Caco-2 (cell line): ENCODE measurements at regions of chr12 and their contacts with region 1.

Region 1: DNA sequence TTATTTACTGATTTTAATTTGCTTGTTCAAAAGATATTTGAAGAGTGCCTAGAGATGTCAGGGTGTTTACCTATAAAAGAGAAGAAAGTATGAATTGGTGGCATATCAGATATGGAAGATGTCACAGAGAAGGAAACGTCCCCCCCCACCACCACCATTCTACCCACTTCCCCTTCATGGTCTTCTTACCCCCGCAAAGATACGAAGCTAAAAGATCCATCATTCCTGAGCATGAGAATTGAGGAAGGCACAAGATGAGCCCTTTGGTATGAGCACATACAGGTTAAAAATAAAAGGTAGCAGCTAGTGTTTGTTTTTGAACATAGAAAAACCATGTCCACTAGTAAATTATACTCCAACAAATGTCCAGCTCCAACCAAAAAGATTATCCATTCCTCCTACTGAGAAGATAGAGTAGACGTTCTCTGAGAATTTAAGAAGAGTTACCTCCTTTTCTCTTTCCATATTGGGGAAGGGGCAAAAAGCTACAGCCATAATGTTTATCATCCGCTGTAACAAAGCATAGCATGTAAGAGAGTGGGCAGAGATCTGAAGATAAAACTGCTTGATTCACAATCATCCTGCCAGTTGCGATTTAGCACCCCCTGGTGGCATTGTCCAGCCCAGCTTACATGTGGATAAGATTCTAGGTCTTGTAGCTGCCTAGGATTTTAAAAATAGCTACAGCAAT is 29.1 kb downstream of the NFYB start:
- DNase-seq: peak; percentile 82 to 86
- H3K4me3 ChIP-seq: no peak overlapping the region
- H3K4me3 Mint-ChIP-seq: no peak overlapping the region
- H3K27ac Mint-ChIP-seq: no peak overlapping the region
- H3K4me1 ChIP-seq: no peaks in the 10 kb centered on the region
- H3K4me1 Mint-ChIP-seq: no peaks in the 10 kb centered on the region
- H3K27me3 ChIP-seq: no peaks in the 10 kb centered on the region
- H3K27me3 Mint-ChIP-seq: no peaks in the 10 kb centered on the region
- CTCF ChIP-seq: peak; percentile 78 to 90

Region 2: DNA sequence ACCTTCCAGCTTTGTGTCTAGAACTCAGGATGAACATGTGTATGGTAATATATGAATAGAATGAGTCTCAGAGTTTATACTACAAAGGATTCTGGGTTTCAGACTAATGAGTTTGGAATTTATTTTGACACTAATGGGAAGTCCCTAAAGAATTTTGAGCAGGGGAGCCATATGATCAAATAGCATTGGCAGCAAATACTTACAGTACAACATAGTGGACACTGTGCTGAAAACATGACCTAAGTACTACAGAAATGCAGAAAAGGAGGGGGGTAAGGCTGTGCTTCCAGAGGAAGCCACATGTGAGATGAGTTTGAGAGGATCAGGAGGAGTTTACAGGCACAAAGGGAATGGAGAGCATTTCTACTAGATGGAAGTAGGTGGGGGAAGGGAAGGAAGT is 839.0 kb before region 1 on chr12:
- CTCF ChIA-PET with region 1: no interaction called
- POLR2A ChIA-PET with region 1: no interaction called
- intact Hi-C with region 1: no loop called
- DNase-seq: no peak
- H3K4me3 ChIP-seq: no peak overlapping the region
- H3K4me3 Mint-ChIP-seq: no peak overlapping the region
- H3K27ac Mint-ChIP-seq: no peak overlapping the region
- H3K4me1 ChIP-seq: no peaks in the 10 kb centered on the region; the same call in 1 of the 2 replicates
- H3K4me1 Mint-ChIP-seq: no peaks in the 10 kb centered on the region
- H3K27me3 ChIP-seq: no peaks in the 10 kb centered on the region
- H3K27me3 Mint-ChIP-seq: peaks cover 5% of the 10 kb centered on the region
- CTCF ChIP-seq: no peak

Region 3: DNA sequence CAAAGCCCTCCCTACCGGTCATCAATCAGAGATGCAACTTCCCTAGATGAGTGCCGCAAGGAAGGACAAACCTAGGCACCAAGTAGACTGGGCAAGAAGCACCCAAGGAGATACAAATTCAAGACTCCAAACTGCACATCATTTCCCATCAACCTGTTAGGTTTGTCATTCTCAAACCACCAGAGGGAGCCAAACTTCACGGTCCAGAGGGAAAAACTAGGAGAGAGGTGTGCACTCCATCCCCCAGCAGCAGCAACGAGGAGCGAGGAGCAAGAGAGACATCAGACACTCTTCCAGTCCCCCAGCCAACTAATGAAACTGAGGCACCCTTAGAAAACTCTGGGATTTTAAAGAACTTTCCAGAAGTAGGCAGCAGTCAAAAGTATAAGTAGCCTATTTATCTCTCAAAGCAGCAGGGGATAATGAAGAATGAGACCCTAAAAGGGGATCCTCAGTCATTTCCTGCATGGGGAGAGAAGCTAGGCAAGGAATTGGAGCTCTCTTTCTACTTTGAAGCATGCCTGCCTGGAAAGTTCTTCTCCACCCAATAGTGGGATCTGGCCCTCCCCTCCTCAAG is 230.9 kb before region 1 on chr12:
- CTCF ChIA-PET with region 1: interaction called, 3 read pairs
- POLR2A ChIA-PET with region 1: no interaction called
- intact Hi-C with region 1: loop called (anchors 1 kb)
- DNase-seq: peak; percentile 67 to 73
- H3K4me3 ChIP-seq: no peak overlapping the region
- H3K4me3 Mint-ChIP-seq: no peak overlapping the region
- H3K27ac Mint-ChIP-seq: no peak overlapping the region
- H3K4me1 ChIP-seq: no peaks in the 10 kb centered on the region
- H3K4me1 Mint-ChIP-seq: no peaks in the 10 kb centered on the region
- H3K27me3 ChIP-seq: no peaks in the 10 kb centered on the region
- H3K27me3 Mint-ChIP-seq: peaks cover 2% of the 10 kb centered on the region
- CTCF ChIP-seq: peak; percentile 76 to 82

Region 4: GRCh38 chr12:103884316-103884715 is 224.6 kb before region 1 on chr12:
- CTCF ChIA-PET with region 1: interaction called, 8 read pairs
- POLR2A ChIA-PET with region 1: no interaction called
- intact Hi-C with region 1: loop called (anchors 1 kb)
- DNase-seq: peak in 1 of 2 experiments; percentile 25
- H3K4me3 ChIP-seq: no peak overlapping the region
- H3K4me3 Mint-ChIP-seq: no peak overlapping the region
- H3K27ac Mint-ChIP-seq: no peak overlapping the region
- H3K4me1 ChIP-seq: no peaks in the 10 kb centered on the region
- H3K4me1 Mint-ChIP-seq: no peaks in the 10 kb centered on the region
- H3K27me3 ChIP-seq: no peaks in the 10 kb centered on the region
- H3K27me3 Mint-ChIP-seq: peaks cover 2% of the 10 kb centered on the region
- CTCF ChIP-seq: peak in 1 of 2 experiments; percentile 45

Region 5: GRCh38 chr12:104057771-104058197 is 51.1 kb before region 1 on chr12:
- CTCF ChIA-PET with region 1: interaction called, 15 read pairs
- POLR2A ChIA-PET with region 1: no interaction called
- intact Hi-C with region 1: loop called (anchors 1 kb)
- DNase-seq: no peak
- H3K4me3 ChIP-seq: no peak overlapping the region
- H3K4me3 Mint-ChIP-seq: no peak overlapping the region
- H3K27ac Mint-ChIP-seq: no peak overlapping the region
- H3K4me1 ChIP-seq: no peaks in the 10 kb centered on the region
- H3K4me1 Mint-ChIP-seq: no peaks in the 10 kb centered on the region
- H3K27me3 ChIP-seq: no peaks in the 10 kb centered on the region
- H3K27me3 Mint-ChIP-seq: peaks cover 18% of the 10 kb centered on the region
- CTCF ChIP-seq: peak; percentile 49 to 61

Region 6: GRCh38 chr12:104095289-104095688 is 13.6 kb before region 1 on chr12:
- CTCF ChIA-PET with region 1: interaction called, 10 read pairs
- POLR2A ChIA-PET with region 1: no interaction called
- intact Hi-C with region 1: no loop called
- DNase-seq: no peak
- H3K4me3 ChIP-seq: no peak overlapping the region
- H3K4me3 Mint-ChIP-seq: no peak overlapping the region
- H3K27ac Mint-ChIP-seq: no peak overlapping the region
- H3K4me1 ChIP-seq: no peaks in the 10 kb centered on the region
- H3K4me1 Mint-ChIP-seq: no peaks in the 10 kb centered on the region
- H3K27me3 ChIP-seq: no peaks in the 10 kb centered on the region
- H3K27me3 Mint-ChIP-seq: no peaks in the 10 kb centered on the region
- CTCF ChIP-seq: no peak

Region 7: GRCh38 chr12:104177663-104178501 is 69.0 kb after region 1 on chr12:
- CTCF ChIA-PET with region 1: no interaction called
- POLR2A ChIA-PET with region 1: no interaction called
- intact Hi-C with region 1: no loop called
- DNase-seq: no peak
- H3K4me3 ChIP-seq: no peak overlapping the region
- H3K4me3 Mint-ChIP-seq: no peak overlapping the region
- H3K27ac Mint-ChIP-seq: no peak overlapping the region
- H3K4me1 ChIP-seq: no peaks in the 10 kb centered on the region; the same call in 1 of the 2 replicates
- H3K4me1 Mint-ChIP-seq: no peaks in the 10 kb centered on the region
- H3K27me3 ChIP-seq: no peaks in the 10 kb centered on the region
- H3K27me3 Mint-ChIP-seq: no peaks in the 10 kb centered on the region
- CTCF ChIP-seq: no peak